Posterior vena cava (tissue), 2 donors: ENCODE measurements at regions of chr11 and their contacts with region 1.

Region 1: GRCh38 chr11:65506770-65507505 is 8.1 kb downstream of the MALAT1 start:
- DNase-seq: peak; percentile 88

Region 2: DNA sequence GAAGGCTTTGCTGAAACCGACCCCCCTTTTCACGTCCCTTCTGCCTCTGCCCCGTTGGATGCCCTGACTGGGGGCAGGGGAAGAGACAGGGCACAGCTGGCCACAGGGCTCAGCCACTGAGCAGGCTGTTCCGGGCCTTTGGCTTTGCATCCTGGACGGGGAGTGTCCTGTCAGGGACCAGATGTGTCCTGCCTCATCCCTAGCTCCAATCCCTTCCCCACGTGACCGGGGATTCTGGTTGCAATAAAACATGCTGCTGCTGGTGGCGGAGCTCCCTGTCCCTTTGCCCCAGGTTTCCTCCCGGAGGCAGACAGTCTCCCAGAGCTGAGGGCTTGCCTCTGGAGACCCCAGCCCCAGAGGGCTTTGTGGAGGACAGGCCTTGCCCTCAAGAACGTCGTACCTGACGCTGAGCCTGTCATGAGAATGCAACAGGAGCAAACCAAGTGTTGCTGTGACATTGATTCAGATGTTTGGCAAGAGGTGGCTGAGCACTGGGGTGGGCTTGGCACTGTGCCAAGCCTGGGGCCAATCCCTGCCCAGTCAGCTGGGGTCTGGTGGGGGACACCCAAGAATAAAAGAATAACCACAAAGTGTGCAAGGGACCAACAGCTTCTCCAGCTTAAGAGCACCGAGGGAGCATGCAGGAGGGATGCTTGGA is 185.0 kb before region 1 on chr11:
- intact Hi-C with region 1: no loop called
- DNase-seq: no peak

Region 3: DNA sequence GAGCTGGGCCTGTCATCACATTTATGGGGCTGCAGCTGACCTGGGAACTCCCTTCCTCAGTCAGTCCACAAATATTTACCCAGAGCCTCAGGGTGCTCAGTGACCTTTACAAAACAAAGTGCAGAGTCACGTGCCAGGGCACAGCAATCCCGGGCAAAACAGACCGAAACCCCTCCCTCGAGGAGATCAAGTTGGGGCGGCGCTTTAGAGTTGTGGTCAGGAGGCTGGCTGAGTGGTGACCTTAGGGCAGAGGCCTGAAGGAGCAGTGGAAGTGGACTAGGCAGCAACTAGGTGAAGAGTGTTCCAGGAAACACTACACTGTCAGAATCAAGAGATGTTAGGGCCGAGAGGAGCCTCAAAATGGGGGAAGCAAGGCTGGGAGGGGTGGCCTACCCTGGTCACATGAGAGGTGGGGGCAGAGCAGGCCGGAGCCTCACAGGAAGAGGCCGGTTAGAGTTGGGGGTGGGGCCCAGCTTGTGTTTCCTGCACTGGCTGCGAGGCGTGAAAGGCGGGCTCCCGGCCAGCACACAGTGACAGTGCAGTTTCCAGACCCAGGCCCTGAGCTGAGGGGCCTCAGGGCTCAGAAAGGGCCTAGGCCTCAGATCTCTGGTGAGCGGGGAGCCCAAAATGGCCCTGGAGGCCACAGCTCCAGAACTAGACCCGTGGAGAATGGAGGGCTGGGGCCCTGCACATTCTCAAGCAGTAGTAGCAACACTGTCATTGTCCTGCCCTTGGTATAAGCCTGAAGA is 88.1 kb before region 1 on chr11:
- intact Hi-C with region 1: loop called (anchors 2 kb)
- DNase-seq: peak; percentile 99

Region 4: GRCh38 chr11:65425105-65425970 is 81.6 kb before region 1 on chr11:
- intact Hi-C with region 1: loop called in 1 of 2 experiments (anchors 5 kb)
- DNase-seq: peak; percentile 77

Region 5: GRCh38 chr11:65471410-65471762 is 35.6 kb before region 1 on chr11:
- intact Hi-C with region 1: loop called in 1 of 2 experiments (anchors 5 kb)
- DNase-seq: peak; percentile 91